Activated T-helper 2 cell treated with anti-CD3 and anti-CD28 coated beads, Interferon-gamma antibody, Interleukin-2, Interleukin-4, amounts not matched to agents 10 μg/mL and 5 μg/mL and 100 μg/mL, durations not matched to agents 14 hours and 24 hours and 36 hours (primary cell): ENCODE measurements at regions of chr2 and their contacts with region 1.

Region 1: GRCh38 chr2:68251187-68251854 is 1.0 kb downstream of the PPP3R1 start:
- DNase-seq: peak; percentile 75
- H3K4me3 Mint-ChIP-seq: peak overlapping the region; percentile 87
- H3K27ac Mint-ChIP-seq: peak overlapping the region; percentile 94
- H3K4me1 Mint-ChIP-seq: peaks cover 29% of the 10 kb centered on the region
- H3K27me3 Mint-ChIP-seq: no peaks in the 10 kb centered on the region

Region 2: GRCh38 chr2:68074050-68074449 is 177.3 kb before region 1 on chr2:
- intact Hi-C with region 1: no loop called
- DNase-seq: no peak
- H3K4me3 Mint-ChIP-seq: no peak overlapping the region
- H3K27ac Mint-ChIP-seq: no peak overlapping the region
- H3K4me1 Mint-ChIP-seq: no peaks in the 10 kb centered on the region
- H3K27me3 Mint-ChIP-seq: peaks cover 41% of the 10 kb centered on the region

Region 3: DNA sequence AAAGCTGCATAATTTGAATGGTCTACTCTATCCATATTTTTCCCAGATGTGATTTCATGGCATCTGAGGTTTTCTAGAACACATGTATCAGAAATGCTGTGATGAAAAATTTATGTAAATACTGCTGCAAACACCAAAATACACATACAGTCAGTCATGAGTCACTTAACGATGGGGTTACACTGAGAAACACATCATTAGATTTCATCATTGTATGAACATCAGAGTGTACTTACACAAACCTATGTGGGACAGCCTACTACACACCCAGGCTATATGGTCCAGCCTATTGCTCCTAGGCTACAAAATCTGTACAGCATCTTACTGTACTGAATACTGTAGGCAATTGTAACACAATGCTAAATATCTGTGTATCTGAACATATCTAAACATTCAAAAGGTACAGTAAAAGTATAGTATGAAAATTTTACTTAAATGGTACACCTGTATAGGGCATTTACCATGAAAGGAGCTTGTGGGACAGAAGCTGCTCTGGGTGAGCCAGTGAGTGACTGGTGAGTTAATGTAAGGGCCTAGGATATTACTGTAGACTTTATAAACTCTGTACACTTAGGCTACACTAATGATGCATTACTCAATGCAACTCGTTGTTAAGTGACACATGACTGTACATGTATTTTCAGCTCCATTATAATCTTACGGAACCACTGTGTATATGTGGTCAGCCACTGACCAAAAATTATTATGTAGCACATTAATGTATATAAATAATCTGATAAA is 60.2 kb before region 1 on chr2:
- intact Hi-C with region 1: loop called (anchors 2 kb)
- DNase-seq: no peak
- H3K4me3 Mint-ChIP-seq: no peak overlapping the region
- H3K27ac Mint-ChIP-seq: peak overlapping the region; percentile 79
- H3K4me1 Mint-ChIP-seq: peaks cover 33% of the 10 kb centered on the region
- H3K27me3 Mint-ChIP-seq: no peaks in the 10 kb centered on the region

Region 4: DNA sequence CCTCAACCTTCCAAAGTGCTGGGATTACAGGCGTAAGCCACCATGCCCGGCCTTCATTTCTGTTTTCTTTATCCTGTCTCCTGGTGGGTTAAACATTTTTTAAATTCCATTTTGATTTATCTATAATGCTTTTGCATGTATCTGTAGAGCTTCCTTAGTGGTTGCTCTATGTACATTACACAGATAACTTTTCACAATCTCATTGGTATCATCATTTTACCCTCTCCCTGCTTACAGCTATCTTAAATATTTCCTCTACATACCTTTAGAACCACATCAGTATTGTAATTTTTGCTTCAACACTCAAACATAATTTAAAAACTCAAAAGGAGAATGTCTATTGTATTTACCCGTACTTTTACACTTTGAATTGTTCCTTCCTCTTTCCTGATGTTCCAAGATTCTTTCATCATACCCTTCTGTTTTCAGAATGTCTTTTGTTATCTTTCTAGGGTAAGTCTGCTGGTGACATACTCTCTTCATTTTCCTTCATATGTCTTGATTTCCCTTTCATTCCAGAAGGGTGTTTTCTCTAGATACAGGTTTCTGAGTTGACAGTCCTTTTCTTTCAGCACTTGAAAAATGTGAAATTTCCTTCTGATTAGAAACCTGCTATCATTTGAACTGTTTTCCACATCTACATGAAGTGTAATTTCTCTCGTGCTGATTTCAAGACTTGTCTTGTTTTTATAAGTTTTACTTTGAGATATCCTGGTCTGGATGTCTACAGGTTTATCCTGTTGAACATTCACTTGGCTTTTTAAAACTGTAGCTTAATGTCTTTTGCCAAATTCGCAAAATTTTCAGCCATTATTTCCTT is 20.9 kb before region 1 on chr2:
- intact Hi-C with region 1: loop called (anchors 2 kb)
- DNase-seq: no peak
- H3K4me3 Mint-ChIP-seq: no peak overlapping the region
- H3K27ac Mint-ChIP-seq: no peak overlapping the region
- H3K4me1 Mint-ChIP-seq: peaks cover 48% of the 10 kb centered on the region
- H3K27me3 Mint-ChIP-seq: no peaks in the 10 kb centered on the region

Region 5: GRCh38 chr2:68352651-68353391 is 101.5 kb after region 1 on chr2:
- intact Hi-C with region 1: no loop called
- DNase-seq: no peak
- H3K4me3 Mint-ChIP-seq: no peak overlapping the region
- H3K27ac Mint-ChIP-seq: no peak overlapping the region
- H3K4me1 Mint-ChIP-seq: no peaks in the 10 kb centered on the region
- H3K27me3 Mint-ChIP-seq: peaks cover 27% of the 10 kb centered on the region

Region 6: DNA sequence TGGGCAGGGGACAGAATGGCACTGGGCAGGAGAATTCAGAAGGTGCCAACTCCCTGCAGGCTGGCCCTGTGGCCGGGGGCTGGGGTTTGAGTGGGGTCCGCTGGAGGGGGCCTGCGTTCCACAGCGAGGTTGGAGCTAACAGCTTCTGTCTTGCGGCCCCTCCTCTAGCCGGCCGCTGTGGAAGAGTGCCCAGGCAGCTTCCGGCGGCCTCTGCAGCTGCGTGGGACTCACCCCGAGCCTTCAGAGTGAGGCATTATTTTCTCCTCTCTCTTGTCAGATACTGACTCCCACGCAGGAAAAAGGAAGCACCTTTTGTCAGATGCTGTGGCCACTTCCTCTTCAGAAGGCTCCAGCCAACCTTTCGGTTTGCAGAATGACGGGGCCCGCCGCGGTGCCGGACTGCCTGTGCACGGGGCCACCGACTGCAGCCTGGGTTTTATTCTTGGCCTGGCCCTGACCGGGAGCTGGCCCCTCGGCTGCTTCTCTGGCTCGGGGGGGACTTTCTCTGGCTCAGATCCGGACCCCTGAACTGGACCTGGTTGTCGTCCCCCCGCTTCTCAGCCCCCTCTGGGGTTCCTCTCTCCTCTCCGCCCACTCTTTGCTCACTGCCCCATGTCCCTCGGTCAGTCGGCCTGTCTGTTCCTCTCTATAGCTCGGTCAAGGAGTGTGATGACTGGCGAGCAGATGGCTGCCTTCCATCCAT is 523.4 kb after region 1 on chr2:
- intact Hi-C with region 1: loop called (anchors 5 kb)
- DNase-seq: peak; percentile 52
- H3K4me3 Mint-ChIP-seq: peak overlapping the region; percentile 77
- H3K27ac Mint-ChIP-seq: peak overlapping the region; percentile 86
- H3K4me1 Mint-ChIP-seq: peaks cover 83% of the 10 kb centered on the region
- H3K27me3 Mint-ChIP-seq: no peaks in the 10 kb centered on the region